CD8-positive, alpha-beta T cell (primary cell): ENCODE measurements at regions of chr3 and their contacts with region 1.

Region 1: GRCh38 chr3:186432189-186432588 is 70.2 kb upstream of the DGKG start:
- DNase-seq: no peak
- ATAC-seq: no peak
- H3K4me3 ChIP-seq: no peak overlapping the region
- H3K4me3 Mint-ChIP-seq: no peak overlapping the region
- H3K27ac ChIP-seq: no peak overlapping the region
- H3K27ac Mint-ChIP-seq: no peak overlapping the region
- H3K4me1 ChIP-seq: no peaks in the 10 kb centered on the region
- H3K4me1 Mint-ChIP-seq: no peaks in the 10 kb centered on the region
- H3K27me3 ChIP-seq: no peaks in the 10 kb centered on the region
- H3K27me3 Mint-ChIP-seq: no peaks in the 10 kb centered on the region
- CTCF ChIP-seq: no peak

Region 2: DNA sequence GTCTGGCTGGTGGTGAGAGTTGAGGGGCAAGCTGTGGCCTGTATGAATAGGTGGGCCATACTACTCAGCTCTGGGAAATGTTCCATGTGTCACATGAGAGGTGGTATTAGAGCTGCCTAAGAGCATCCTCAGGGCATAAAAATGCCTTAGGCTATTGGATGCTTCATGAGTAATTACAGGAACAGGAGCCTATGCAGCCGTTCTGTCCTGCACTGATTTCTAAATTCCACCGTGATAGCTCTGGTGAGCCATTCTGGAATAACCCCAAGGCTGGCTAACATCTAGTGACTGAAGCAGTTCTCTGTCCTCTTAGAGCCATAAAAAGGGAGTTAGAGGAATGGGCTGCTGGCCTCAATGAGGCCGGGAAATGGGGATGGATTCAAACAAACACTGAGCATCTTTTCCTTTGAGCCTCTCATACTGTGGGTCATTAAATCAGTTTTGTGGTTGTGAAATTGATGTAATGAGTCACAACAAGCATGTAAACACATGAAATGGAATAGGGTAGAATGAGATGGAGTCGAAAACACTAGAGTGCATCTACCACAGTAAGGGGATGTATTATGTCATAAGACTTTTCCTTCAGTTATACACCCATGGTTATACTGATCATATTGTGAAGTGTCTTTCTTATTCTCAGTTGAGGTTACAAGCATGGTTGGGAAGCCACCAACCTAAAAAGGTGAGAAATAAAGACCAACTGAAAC is 111.2 kb before region 1 on chr3:
- CTCF ChIA-PET with region 1: no interaction called
- POLR2A ChIA-PET with region 1: no interaction called
- intact Hi-C with region 1: no loop called
- DNase-seq: no peak
- ATAC-seq: no peak
- H3K4me3 ChIP-seq: no peak overlapping the region
- H3K4me3 Mint-ChIP-seq: no peak overlapping the region
- H3K27ac ChIP-seq: no peak overlapping the region
- H3K27ac Mint-ChIP-seq: no peak overlapping the region
- H3K4me1 ChIP-seq: no peaks in the 10 kb centered on the region
- H3K4me1 Mint-ChIP-seq: no peaks in the 10 kb centered on the region
- H3K27me3 ChIP-seq: no peaks in the 10 kb centered on the region
- H3K27me3 Mint-ChIP-seq: peaks cover 4% of the 10 kb centered on the region
- CTCF ChIP-seq: no peak

Region 3: GRCh38 chr3:186394566-186395217 is 37.5 kb before region 1 on chr3:
- CTCF ChIA-PET with region 1: no interaction called
- POLR2A ChIA-PET with region 1: no interaction called
- intact Hi-C with region 1: no loop called
- DNase-seq: no peak
- ATAC-seq: no peak
- H3K4me3 ChIP-seq: no peak overlapping the region
- H3K4me3 Mint-ChIP-seq: no peak overlapping the region
- H3K27ac ChIP-seq: no peak overlapping the region
- H3K27ac Mint-ChIP-seq: no peak overlapping the region
- H3K4me1 ChIP-seq: no peaks in the 10 kb centered on the region
- H3K4me1 Mint-ChIP-seq: no peaks in the 10 kb centered on the region
- H3K27me3 ChIP-seq: no peaks in the 10 kb centered on the region
- H3K27me3 Mint-ChIP-seq: no peaks in the 10 kb centered on the region
- CTCF ChIP-seq: no peak

Region 4: GRCh38 chr3:186406669-186407635 is 25.2 kb before region 1 on chr3:
- CTCF ChIA-PET with region 1: no interaction called
- POLR2A ChIA-PET with region 1: no interaction called
- intact Hi-C with region 1: loop called in 1 of 2 experiments (anchors 1 kb)
- DNase-seq: no peak
- ATAC-seq: no peak
- H3K4me3 ChIP-seq: no peak overlapping the region
- H3K4me3 Mint-ChIP-seq: no peak overlapping the region
- H3K27ac ChIP-seq: no peak overlapping the region
- H3K27ac Mint-ChIP-seq: no peak overlapping the region
- H3K4me1 ChIP-seq: no peaks in the 10 kb centered on the region
- H3K4me1 Mint-ChIP-seq: no peaks in the 10 kb centered on the region
- H3K27me3 ChIP-seq: no peaks in the 10 kb centered on the region
- H3K27me3 Mint-ChIP-seq: no peaks in the 10 kb centered on the region
- CTCF ChIP-seq: no peak

Region 5: GRCh38 chr3:186502138-186502948 is 70.2 kb after region 1 on chr3:
- CTCF ChIA-PET with region 1: no interaction called
- POLR2A ChIA-PET with region 1: no interaction called
- intact Hi-C with region 1: no loop called
- DNase-seq: no peak
- ATAC-seq: no peak
- H3K4me3 ChIP-seq: peak overlapping the region in 1 of 2 experiments; percentile 4
- H3K4me3 Mint-ChIP-seq: peak overlapping the region; percentile 65
- H3K27ac ChIP-seq: no peak overlapping the region
- H3K27ac Mint-ChIP-seq: no peak overlapping the region
- H3K4me1 ChIP-seq: peaks cover 9% of the 10 kb centered on the region
- H3K4me1 Mint-ChIP-seq: peaks cover 12% of the 10 kb centered on the region
- H3K27me3 ChIP-seq: no peaks in the 10 kb centered on the region
- H3K27me3 Mint-ChIP-seq: peaks cover 4% of the 10 kb centered on the region
- CTCF ChIP-seq: no peak